Activated naive CD4-positive, alpha-beta T cell treated with anti-CD3 and anti-CD28 coated beads for 36 hours (primary cell): ENCODE measurements at regions of chr5 and their contacts with region 1.

Region 1: GRCh38 chr5:81971712-81972495 is at the start of gene ATG10:
- DNase-seq: peak; percentile 86
- H3K4me3 Mint-ChIP-seq: peak within 1 kb of the TSS; percentile 94
- H3K27ac Mint-ChIP-seq: peak within 1 kb of the TSS; percentile 98
- H3K4me1 Mint-ChIP-seq: peaks cover 22% of the 10 kb centered on the region
- H3K27me3 Mint-ChIP-seq: no peaks in the 10 kb centered on the region
- total RNA-seq, gene ATG10: 7.2 to 8.0 TPM

Region 2: GRCh38 chr5:81420039-81420667 is 551.8 kb before region 1 on chr5:
- CTCF ChIA-PET with region 1: no interaction called
- intact Hi-C with region 1: loop called (anchors 2 kb)
- DNase-seq: peak; percentile 36
- H3K4me3 Mint-ChIP-seq: no peak overlapping the region
- H3K27ac Mint-ChIP-seq: no peak overlapping the region
- H3K4me1 Mint-ChIP-seq: peaks cover 13% of the 10 kb centered on the region
- H3K27me3 Mint-ChIP-seq: no peaks in the 10 kb centered on the region

Region 3: DNA sequence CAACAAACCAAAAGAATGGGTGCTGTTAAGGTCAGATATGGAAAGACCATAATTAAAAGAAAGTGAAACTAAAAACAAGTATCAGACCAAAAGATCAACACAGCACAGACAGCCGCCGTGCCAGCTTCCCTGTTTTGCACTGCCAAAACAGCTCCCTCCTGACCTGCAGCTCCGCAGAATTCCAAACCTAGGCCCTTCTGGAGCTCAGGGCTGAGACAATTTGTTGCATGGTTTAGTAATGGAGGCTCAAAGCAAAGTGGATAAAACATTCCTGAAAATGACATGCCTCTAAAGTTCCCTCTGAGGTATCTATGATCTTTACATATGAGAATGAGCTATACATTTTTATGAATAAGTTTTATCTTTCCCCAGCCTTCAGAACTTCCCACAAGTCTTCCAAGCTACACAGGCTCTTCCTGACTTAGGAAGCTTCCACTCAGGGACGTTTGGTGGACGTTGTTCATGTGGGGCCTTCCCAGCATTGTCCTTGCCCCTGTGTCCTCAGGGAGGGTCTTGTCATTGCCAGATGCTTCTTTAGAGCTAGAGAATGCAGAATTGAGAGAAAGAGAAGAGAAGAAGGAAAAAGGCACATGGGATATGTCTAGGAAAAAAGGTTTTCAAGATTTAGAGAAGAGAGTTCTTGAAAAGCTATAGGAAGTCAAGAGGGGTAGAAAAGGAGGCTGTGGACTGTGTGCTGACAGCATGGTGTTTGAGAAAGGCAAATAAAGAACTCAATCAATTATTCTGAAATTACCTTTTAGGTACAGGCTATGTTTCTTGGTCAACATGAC is 192.6 kb before region 1 on chr5:
- CTCF ChIA-PET with region 1: interaction called, 5 read pairs
- intact Hi-C with region 1: loop called (anchors 1 kb)
- DNase-seq: peak; percentile 51
- H3K4me3 Mint-ChIP-seq: peak overlapping the region; percentile 73
- H3K27ac Mint-ChIP-seq: peak overlapping the region; percentile 83
- H3K4me1 Mint-ChIP-seq: peaks cover 16% of the 10 kb centered on the region
- H3K27me3 Mint-ChIP-seq: no peaks in the 10 kb centered on the region

Region 4: DNA sequence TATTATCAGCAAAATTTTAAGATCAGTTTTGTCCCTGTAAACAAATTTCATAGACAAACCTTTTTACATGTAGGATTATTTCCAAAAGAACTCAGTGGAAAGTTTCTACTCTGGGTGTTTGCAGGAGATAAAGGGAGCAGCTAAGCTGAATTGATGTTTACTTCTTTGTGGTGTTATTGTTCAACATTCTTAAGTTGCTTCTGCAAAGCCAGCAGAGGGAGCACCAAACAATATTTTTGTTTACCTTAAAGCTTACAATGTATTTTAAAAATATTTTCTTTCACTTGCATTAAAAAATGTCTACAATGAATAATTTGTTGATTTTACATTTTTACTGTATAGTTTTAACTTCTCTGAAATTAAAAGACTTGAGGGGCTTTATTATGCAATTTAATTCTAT is 135.4 kb after region 1 on chr5:
- CTCF ChIA-PET with region 1: no interaction called
- intact Hi-C with region 1: loop called (anchors 1 kb)
- DNase-seq: no peak
- H3K4me3 Mint-ChIP-seq: no peak overlapping the region
- H3K27ac Mint-ChIP-seq: no peak overlapping the region
- H3K4me1 Mint-ChIP-seq: peaks cover 15% of the 10 kb centered on the region
- H3K27me3 Mint-ChIP-seq: no peaks in the 10 kb centered on the region

Region 5: DNA sequence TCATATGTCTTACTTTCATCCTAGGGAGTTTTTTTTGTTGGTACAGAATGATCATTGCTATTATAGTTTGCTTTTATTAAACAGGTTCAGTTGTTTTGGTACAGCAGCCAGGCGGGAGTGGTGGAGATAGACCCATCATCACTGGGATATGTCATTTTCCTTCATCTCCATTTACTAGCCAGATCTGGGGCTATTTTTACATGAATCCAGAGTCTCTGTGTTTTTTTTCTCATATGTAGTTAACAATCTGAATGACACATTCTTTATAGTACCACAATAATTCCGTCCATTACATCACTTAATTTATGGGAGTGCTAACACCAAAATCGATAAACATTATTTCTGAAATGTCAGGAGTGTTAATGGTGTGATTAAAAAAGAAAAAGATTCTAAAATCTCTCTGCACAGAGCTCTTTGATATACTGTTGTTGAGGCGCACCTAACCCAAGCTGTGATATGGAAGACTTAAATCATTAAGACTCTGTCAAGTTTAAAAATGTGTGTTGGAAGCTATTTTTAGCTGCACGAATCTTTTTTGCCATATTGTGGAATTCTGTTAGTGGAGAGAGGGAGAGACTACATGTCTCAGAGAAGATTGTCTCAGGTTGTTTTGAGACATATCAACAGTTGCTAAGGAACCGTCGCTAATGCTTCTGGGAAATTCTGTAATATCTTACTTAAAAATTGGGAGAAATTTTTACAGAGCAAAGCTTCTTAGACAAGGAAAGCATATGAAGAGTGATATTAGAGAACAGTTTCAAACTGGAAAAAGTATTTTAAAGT is 246.7 kb after region 1 on chr5:
- CTCF ChIA-PET with region 1: no interaction called
- intact Hi-C with region 1: no loop called
- DNase-seq: no peak
- H3K4me3 Mint-ChIP-seq: no peak overlapping the region
- H3K27ac Mint-ChIP-seq: no peak overlapping the region
- H3K4me1 Mint-ChIP-seq: no peaks in the 10 kb centered on the region
- H3K27me3 Mint-ChIP-seq: no peaks in the 10 kb centered on the region

Region 6: DNA sequence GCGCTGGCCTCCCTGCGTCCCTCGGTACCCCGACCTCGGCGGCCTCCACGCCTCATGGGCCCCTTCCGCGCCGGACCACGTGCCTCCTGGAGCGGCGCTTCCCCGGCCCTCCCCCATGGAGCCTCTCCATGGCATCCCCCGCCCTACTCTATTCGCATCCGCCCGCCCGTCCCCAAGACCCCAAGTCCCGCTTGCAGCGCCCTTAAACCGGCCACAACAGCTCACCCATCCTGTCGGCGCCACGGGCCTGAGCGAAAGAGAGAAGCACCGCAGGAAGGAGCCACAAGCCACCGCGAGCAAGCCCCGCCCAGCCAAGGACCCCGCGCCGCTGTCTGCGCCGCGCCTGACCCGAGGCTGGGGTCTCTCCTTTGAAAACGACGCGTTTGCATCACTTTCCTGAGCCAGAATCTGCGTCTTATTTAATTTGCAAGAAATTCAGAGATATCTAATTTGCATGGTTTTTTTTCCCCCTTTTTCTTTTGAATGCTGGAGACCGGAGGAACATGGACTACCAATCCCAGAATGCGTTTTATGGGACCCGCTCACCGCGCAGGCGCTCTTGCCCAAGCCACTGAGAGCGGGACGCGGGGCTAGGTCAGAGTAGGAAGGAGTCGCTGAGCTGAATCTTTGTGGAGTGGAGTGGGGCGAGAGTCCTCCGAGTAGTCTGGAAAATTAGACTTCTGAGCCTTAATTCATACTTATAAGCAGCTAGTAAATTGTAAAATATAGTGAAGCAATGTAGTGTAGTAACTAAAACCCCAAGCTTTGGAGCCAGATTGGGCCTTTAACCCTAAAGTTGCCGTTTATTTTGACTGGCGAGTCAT is 306.4 kb after region 1 on chr5 and contains the start of gene RPS23:
- CTCF ChIA-PET with region 1: no interaction called
- intact Hi-C with region 1: loop called (anchors 1 kb)
- DNase-seq: peak; percentile 93
- H3K4me3 Mint-ChIP-seq: peak within 1 kb of the TSS; percentile 95
- H3K27ac Mint-ChIP-seq: peak within 1 kb of the TSS; percentile 99
- H3K4me1 Mint-ChIP-seq: peaks cover 38% of the 10 kb centered on the region
- H3K27me3 Mint-ChIP-seq: no peaks in the 10 kb centered on the region
- total RNA-seq, gene RPS23: 3,081 to 3,109 TPM